ENCODE measurements at regions of chr12 and their contacts with region 1.

Region 1: GRCh38 chr12:51424662-51425438 is at the start of gene SLC4A8:
- DNase-seq: peak; percentile 97
- CTCF ChIP-seq: peak; percentile 80

Region 2: GRCh38 chr12:51521554-51522276 is 96.9 kb after region 1 on chr12:
- in situ Hi-C with region 1: loop called (anchors 10 kb)
- DNase-seq: no peak
- CTCF ChIP-seq: no peak

Region 3: GRCh38 chr12:51678086-51678724 is 253.4 kb after region 1 on chr12:
- in situ Hi-C with region 1: loop called (anchors 25 kb)
- DNase-seq: peak; percentile 54
- CTCF ChIP-seq: peak; percentile 41